ENCODE measurements at regions of chr1 and their contacts with region 1.

Region 1: GRCh38 chr1:89804642-89805237 is 16.1 kb upstream of the LRRC8D start:
- DNase-seq: peak; percentile 76 to 81
- H3K4me3 ChIP-seq: no peak overlapping the region
- H3K27ac ChIP-seq: no peak overlapping the region
- H3K4me1 ChIP-seq: peaks cover 36% of the 10 kb centered on the region
- H3K27me3 ChIP-seq: no peaks in the 10 kb centered on the region
- CTCF ChIP-seq: peak; percentile 100

Region 2: DNA sequence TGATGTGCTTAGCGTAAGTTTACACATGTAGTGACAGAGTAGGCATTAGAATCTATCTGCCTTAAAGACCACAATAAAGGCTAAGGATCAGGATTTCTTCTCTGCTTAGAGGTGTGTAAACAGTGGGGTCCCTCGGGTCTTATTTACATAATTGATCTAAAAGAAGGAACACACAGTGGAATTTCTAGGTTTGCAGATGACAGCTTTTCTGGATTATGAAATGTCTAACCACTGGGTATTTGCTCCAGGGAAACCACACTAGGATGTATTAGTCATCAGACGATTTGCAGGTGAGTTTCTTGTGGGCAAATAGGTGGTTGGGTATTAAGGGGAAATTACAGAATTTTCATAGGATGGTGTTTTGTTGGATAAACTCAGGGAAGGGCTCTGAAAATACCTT is 21.9 kb after region 1 on chr1:
- CTCF ChIA-PET with region 1: no interaction called
- POLR2A ChIA-PET with region 1: interaction called, 3 read pairs
- intact Hi-C with region 1: loop called (anchors 1 kb)
- DNase-seq: peak in 1 of 2 experiments; percentile 96
- H3K4me3 ChIP-seq: no peak overlapping the region; the same call in 1 of the 2 replicates
- H3K27ac ChIP-seq: peak overlapping the region; percentile 40
- H3K4me1 ChIP-seq: peaks cover 53% of the 10 kb centered on the region
- H3K27me3 ChIP-seq: no peaks in the 10 kb centered on the region
- CTCF ChIP-seq: no peak

Region 3: GRCh38 chr1:89865498-89866385 is 61.0 kb after region 1 on chr1:
- CTCF ChIA-PET with region 1: no interaction called
- POLR2A ChIA-PET with region 1: no interaction called
- intact Hi-C with region 1: loop called (anchors 2 kb)
- DNase-seq: peak; percentile 28 to 100
- H3K4me3 ChIP-seq: peak overlapping the region; percentile 16; the same call in 1 of the 2 replicates
- H3K27ac ChIP-seq: peak overlapping the region; percentile 91
- H3K4me1 ChIP-seq: peaks cover 65% of the 10 kb centered on the region
- H3K27me3 ChIP-seq: no peaks in the 10 kb centered on the region
- CTCF ChIP-seq: no peak

Region 4: DNA sequence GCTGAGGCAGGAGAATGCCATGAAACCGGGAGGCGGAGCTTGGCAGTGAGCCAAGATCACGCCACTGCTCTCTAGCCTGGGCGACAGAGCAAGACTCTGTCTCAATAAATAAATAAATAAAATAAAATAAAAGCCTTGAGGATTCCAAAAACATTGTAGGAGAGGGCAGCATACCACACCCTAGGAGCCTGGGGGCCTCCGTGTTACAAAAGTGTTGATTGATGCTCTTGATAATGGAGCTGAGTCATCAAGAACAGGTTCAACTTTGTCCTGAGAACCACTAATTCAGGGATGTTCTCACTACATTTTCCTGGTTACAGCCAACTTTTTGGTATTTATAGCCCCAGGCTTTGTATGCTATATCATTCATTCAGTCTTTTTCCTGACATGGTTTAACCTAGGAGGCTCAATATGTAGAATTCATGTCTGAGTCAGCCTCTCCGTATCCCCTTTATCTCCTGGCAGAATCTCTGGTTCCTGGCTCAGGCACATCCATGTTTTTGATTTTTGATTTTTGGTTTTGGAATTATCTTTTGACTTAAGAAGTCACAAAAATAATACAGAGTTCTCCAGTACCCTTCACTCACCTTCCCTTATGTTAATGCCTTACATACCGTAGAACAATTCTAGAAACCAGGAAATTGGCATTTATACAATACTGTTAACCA is 85.5 kb after region 1 on chr1:
- CTCF ChIA-PET with region 1: no interaction called
- POLR2A ChIA-PET with region 1: no interaction called
- intact Hi-C with region 1: loop called (anchors 1 kb)
- DNase-seq: peak; percentile 88 to 100
- H3K4me3 ChIP-seq: peak overlapping the region; percentile 14; the same call in 1 of the 2 replicates
- H3K27ac ChIP-seq: peak overlapping the region; percentile 94
- H3K4me1 ChIP-seq: peaks cover 93% of the 10 kb centered on the region
- H3K27me3 ChIP-seq: no peaks in the 10 kb centered on the region
- CTCF ChIP-seq: no peak

Region 5: DNA sequence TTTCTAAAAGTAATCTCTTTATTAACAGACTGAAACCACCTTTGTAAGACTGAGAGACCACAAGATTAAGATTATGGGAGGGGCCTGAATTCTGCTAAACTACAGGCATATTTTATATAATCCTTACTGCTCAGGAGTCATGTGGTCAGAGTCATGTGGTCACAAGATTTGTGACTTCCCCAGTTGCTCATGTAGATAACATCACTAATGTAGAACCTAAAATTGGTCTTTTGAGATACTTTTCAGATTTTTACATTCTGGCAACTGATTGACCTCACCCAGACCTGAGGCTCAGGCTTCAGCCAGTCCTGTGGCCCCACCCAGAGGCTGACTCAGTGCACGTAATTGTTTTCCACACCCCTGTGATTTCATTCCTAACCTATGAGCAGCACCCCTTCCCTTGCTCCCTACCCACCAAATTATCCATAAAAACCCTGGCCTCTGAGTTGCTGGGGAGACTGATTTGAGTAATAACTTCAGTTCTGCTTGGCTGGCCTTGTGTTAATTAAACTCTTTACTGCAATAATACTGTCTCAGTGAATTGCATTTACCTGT is 148.4 kb after region 1 on chr1:
- CTCF ChIA-PET with region 1: no interaction called
- POLR2A ChIA-PET with region 1: no interaction called
- intact Hi-C with region 1: loop called (anchors 1 kb)
- DNase-seq: peak; percentile 83 to 98
- H3K4me3 ChIP-seq: no peak overlapping the region
- H3K27ac ChIP-seq: peak overlapping the region; percentile 94
- H3K4me1 ChIP-seq: peaks cover 73% of the 10 kb centered on the region
- H3K27me3 ChIP-seq: no peaks in the 10 kb centered on the region
- CTCF ChIP-seq: no peak

Region 6: DNA sequence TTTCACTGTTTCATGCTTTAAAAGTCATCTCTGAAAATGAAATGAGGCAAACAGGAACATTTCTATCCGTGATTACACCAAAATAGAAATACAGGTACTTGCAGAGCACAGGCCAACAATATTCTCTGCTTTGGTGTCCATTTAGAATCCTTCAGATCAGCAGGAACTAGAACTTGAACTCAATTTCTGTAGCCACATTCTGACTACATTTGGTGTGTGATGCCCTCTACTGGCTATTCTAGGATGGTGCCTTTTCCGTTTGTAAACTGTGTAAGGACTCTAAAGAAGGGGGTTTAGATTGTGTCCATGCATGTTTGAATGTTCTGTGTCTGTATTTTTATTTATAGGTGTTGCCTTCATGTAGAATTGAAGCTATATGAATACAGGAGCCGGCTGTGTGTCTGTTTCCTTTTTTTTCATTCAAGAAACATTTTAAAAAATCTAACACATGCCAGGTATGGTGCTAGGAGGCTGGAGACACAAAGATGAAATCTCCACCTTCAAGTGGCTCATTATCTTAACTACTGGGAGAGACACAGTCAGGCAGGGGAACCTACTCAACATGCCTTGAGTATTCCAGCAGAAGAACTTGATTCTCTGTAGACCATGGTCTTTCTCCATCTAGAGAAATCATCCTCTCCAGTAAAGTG is 182.6 kb after region 1 on chr1:
- CTCF ChIA-PET with region 1: interaction called, 3 read pairs
- POLR2A ChIA-PET with region 1: interaction called, 4 read pairs
- intact Hi-C with region 1: loop called (anchors 1 kb)
- DNase-seq: peak; percentile 45 to 76
- H3K4me3 ChIP-seq: no peak overlapping the region
- H3K27ac ChIP-seq: peak overlapping the region; percentile 8
- H3K4me1 ChIP-seq: peaks cover 75% of the 10 kb centered on the region
- H3K27me3 ChIP-seq: no peaks in the 10 kb centered on the region
- CTCF ChIP-seq: peak; percentile 99